Common myeloid progenitor, CD34-positive (primary cell): ENCODE measurements at regions of chr6 and their contacts with region 1.

Region 1: GRCh38 chr6:39309942-39310531 is 4.2 kb downstream of the KCNK17 start:
- DNase-seq: peak; percentile 52 to 69 (median 61)
- H3K4me3 ChIP-seq: no peak overlapping the region
- H3K27ac ChIP-seq: no peak overlapping the region
- H3K4me1 ChIP-seq: peaks cover 0 to 56% (median 47%) of the 10 kb centered on the region in 4 experiments
- H3K27me3 ChIP-seq: peaks cover 0 to 7% (median 0%) of the 10 kb centered on the region in 5 experiments

Region 2: DNA sequence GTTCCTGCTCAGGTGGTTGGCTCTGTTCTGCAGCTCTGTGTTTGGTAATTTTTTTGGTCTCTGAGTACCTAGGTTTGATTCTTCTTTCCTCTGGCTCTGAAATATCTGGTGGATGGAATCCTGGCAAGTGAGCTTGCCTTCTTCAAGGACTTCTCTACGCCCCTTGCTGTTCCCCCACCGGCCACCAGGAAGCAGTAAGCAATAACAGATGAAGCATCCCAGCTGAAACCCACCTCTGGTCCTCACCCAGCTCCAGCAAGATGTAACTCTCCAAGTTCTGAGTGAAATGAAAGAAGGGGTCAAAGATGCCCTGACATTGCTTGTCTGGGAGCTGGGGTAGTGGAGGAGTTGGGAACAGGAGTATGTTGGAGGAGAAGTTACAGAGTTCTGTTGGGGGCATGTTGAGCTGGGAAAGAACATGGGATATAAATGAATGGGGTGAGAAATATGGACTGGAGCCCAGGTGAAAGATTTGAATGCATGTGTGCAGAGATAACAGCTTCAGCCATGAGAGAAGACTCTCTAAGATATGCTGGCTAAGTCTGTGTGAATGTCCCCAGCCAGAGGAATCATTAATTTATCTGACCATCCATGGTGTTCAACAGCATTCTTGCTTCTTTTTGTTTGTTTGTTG is 312.8 kb before region 1 on chr6:
- CTCF ChIA-PET with region 1: interaction called, 27 read pairs
- POLR2A ChIA-PET with region 1: interaction called, 3 read pairs
- DNase-seq: peak; percentile 60 to 80 (median 73)
- H3K4me3 ChIP-seq: no peak overlapping the region
- H3K27ac ChIP-seq: no peak overlapping the region
- H3K4me1 ChIP-seq: no peaks in the 10 kb centered on the region
- H3K27me3 ChIP-seq: peaks cover 12 to 45% (median 15%) of the 10 kb centered on the region in 5 experiments

Region 3: GRCh38 chr6:39048481-39049399 is 261.3 kb before region 1 on chr6 and contains the start of gene GLP1R:
- CTCF ChIA-PET with region 1: no interaction called
- POLR2A ChIA-PET with region 1: no interaction called
- DNase-seq: peak in 2 of 3 donors; percentile 25 to 31
- H3K4me3 ChIP-seq: peak within 1 kb of the TSS in 4 of 7 experiments; percentile 14 to 66 (median 55)
- H3K27ac ChIP-seq: no peak within 1 kb of the TSS
- H3K4me1 ChIP-seq: peaks cover 0 to 26% (median 22%) of the 10 kb centered on the region in 4 experiments
- H3K27me3 ChIP-seq: peaks cover 0 to 64% (median 28%) of the 10 kb centered on the region in 5 experiments

Region 4: DNA sequence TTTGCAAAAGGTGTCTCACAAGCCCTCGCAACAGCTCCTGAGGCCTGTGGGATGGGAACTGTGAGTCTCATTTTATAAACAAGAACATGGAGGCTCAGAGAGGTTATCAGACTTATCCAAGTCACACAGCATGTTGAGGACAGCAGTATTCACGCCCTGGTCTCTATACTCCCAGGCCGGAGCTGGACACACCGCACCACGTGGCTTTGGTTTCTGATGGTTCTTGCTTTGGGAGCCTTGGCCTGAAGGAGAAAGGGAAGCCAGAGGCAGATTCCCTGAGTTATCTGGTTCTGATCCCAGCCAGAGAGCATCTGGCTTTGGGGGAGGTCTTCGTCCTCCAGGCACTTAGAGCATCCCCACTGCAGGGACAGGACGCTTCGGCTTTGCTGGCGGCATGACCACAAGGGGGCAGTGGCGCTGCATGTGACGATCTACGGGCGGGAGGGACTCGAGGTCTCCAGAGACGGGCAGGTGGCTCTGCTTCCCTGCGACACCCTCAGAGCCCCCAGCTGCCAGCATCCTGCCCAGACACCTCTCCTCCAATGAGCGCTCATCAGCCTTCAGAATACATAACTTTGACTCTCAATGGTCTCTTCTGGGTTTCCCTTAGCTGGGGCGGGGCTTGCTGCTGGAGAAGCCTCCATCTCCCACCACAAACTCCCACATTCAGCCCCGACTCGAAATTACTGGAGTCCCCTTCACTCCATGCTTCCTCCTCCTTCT is 143.7 kb before region 1 on chr6:
- CTCF ChIA-PET with region 1: interaction called, 251 read pairs
- POLR2A ChIA-PET with region 1: interaction called, 3 read pairs
- DNase-seq: peak; percentile 73 to 89 (median 86)
- H3K4me3 ChIP-seq: no peak overlapping the region
- H3K27ac ChIP-seq: no peak overlapping the region
- H3K4me1 ChIP-seq: peaks cover 0 to 6% (median 1%) of the 10 kb centered on the region in 4 experiments
- H3K27me3 ChIP-seq: peaks cover 0 to 13% (median 0%) of the 10 kb centered on the region in 5 experiments

Region 5: GRCh38 chr6:39322306-39322850 is 12.3 kb after region 1 on chr6 and contains the start of gene KCNK16:
- CTCF ChIA-PET with region 1: interaction called, 13 read pairs
- POLR2A ChIA-PET with region 1: no interaction called
- DNase-seq: no peak
- H3K4me3 ChIP-seq: no peak within 1 kb of the TSS
- H3K27ac ChIP-seq: no peak within 1 kb of the TSS
- H3K4me1 ChIP-seq: peaks cover 4 to 56% (median 47%) of the 10 kb centered on the region in 4 experiments
- H3K27me3 ChIP-seq: no peaks in the 10 kb centered on the region

Region 6: DNA sequence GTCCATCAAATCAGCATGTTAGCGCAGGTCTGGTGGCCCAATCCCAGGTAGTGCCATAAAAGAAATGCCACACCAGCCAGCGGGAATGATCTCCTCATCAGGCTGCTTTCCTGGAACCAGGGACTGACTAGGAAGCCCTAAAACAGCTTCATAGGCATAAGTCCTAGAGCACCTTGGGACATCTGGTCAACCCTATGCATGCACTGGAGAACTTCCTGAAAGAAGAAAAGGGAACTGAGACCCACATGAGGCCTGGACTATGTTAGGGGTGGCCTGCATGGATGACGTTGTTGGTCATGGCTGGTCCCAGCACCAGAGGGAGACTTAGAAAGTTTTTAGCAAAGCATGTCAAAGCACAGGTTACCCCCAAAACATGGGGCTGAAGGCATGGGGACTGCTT is 20.0 kb after region 1 on chr6:
- CTCF ChIA-PET with region 1: interaction called, 13 read pairs
- POLR2A ChIA-PET with region 1: no interaction called
- DNase-seq: peak; percentile 40 to 80 (median 79)
- H3K4me3 ChIP-seq: no peak overlapping the region
- H3K27ac ChIP-seq: no peak overlapping the region
- H3K4me1 ChIP-seq: peaks cover 0 to 47% (median 28%) of the 10 kb centered on the region in 4 experiments
- H3K27me3 ChIP-seq: no peaks in the 10 kb centered on the region

Region 7: GRCh38 chr6:39342692-39343395 is 32.8 kb after region 1 on chr6:
- CTCF ChIA-PET with region 1: interaction called, 32 read pairs
- POLR2A ChIA-PET with region 1: interaction called, 3 read pairs
- DNase-seq: peak in 2 of 3 donors; percentile 35 to 48
- H3K4me3 ChIP-seq: no peak overlapping the region
- H3K27ac ChIP-seq: no peak overlapping the region
- H3K4me1 ChIP-seq: peaks cover 32 to 66% (median 60%) of the 10 kb centered on the region in 4 experiments
- H3K27me3 ChIP-seq: no peaks in the 10 kb centered on the region

Region 8: GRCh38 chr6:39347906-39348585 is 38.0 kb after region 1 on chr6:
- CTCF ChIA-PET with region 1: interaction called, 32 read pairs
- POLR2A ChIA-PET with region 1: interaction called, 3 read pairs
- DNase-seq: peak; percentile 47 to 72 (median 55)
- H3K4me3 ChIP-seq: no peak overlapping the region
- H3K27ac ChIP-seq: no peak overlapping the region
- H3K4me1 ChIP-seq: peaks cover 0 to 14% (median 8%) of the 10 kb centered on the region in 4 experiments
- H3K27me3 ChIP-seq: no peaks in the 10 kb centered on the region